WTC11 (cell line): ENCODE measurements at regions of chr3 and their contacts with region 1.

Region 1: DNA sequence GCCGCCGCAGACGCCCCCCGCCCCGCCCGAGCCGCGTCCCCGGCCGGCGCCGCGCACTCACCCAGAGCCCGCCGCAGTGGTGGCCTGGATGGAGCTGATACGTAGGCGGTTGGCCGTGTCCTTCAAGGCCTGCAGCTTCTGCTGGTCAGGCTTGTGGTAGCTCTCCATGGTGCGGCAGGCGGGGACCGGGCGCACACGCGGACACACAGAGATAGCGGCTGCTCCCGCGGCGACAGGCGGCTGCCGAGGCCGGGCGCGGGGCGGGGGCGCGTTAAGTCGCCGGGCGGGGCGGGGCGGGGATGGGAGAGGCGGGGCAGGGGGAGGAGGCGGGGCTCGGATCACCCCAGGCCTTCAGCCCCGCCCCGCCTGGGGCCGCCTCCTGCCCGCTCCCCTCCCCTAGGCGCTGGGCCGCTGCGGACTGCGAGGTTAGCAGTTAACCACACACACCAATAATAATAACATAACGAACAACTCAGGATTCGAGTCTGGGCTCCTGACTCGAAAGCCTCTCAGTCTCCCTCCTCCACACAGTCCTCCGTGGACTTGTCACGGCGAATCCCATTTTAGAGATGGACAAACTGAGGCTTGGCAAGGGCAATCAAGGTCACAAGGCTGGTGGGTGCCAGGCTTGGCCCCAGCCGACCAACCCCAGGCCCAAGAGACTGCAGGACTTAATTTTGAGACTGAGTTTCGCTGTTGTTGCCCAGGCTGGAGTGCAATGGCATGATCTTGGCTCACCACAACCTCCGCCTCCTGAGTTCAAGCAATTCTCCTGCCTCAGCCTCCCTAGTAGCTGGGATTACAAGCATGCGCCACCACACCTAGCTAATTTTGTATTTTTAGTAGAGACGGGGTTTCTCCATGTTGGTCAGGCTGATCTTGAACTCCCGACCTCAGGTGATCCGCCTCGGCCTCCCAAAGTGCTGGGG is at the start of gene TKT:
- DNase-seq: peak; percentile 77
- ATAC-seq: peak; percentile 67
- H3K4me3 Mint-ChIP-seq: peak within 1 kb of the TSS; percentile 85
- H3K27ac Mint-ChIP-seq: peak within 1 kb of the TSS; percentile 92
- H3K4me1 Mint-ChIP-seq: peaks cover 62% of the 10 kb centered on the region
- H3K27me3 Mint-ChIP-seq: peaks cover 9% of the 10 kb centered on the region; the same call in 1 of the 2 replicates
- CTCF ChIP-seq: no peak
- total RNA-seq, gene TKT: 1,040 to 1,222 TPM (median 1,204 TPM) in 3 replicates

Region 2: DNA sequence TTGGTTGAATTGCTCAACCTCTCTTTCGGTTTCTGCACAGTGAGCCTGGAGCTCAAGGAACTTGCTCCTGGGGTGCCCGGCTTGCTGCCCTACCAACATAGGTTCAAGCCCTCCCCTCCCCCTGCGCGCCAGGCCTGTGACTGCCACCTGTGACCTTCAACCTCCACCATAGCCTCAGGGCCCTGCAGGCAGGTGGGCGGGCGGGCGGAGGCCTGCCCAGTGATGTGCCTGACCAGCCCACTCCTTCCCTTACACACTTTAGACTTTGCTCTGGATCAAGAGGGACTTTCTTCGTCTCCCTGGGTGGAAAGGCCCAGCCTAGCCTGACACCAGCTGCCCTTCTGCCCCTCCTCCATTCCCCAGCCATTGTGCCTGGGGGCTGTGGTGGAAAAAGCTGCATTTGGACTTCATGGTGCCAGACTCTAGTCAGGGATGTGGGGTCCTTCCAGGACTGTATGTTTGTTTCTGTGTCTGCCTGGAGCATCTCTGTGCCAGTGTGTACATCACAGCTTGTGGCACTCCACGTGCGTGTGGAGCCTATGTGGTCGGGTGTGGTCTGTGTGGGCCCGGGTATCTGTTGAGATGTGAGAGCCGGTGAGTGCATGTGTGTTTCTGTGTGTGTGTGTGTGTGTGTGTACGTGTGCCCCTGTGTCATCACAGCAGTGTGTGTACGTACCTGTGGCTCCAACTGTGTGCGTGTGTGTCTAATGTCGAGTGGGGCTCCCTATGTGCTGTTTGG is 85.5 kb before region 1 on chr3:
- CTCF ChIA-PET with region 1: no interaction called
- POLR2A ChIA-PET with region 1: no interaction called
- DNase-seq: no peak
- ATAC-seq: no peak
- H3K4me3 Mint-ChIP-seq: no peak overlapping the region
- H3K27ac Mint-ChIP-seq: peak overlapping the region; percentile 81; the same call in 1 of the 2 replicates
- H3K4me1 Mint-ChIP-seq: peaks cover 55% of the 10 kb centered on the region
- H3K27me3 Mint-ChIP-seq: no peaks in the 10 kb centered on the region
- CTCF ChIP-seq: no peak

Region 3: DNA sequence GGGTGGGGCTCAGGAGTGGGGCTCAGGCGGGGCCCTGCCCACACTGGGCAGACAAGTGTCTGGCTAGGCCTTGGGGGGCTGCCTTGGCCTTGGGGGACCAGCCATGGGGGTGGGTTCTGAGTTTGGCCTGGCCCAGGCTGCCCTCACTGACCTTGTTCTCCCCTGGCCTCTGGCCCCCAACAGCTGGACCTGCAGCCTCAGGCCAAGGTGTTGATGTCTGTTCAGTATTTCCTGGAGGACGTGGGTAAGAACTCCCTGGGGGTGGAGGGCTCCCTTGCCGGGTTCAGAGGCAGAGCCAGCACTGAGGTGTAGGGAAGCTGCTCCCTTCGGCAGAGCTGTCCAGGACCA is 75.0 kb before region 1 on chr3:
- CTCF ChIA-PET with region 1: no interaction called
- POLR2A ChIA-PET with region 1: no interaction called
- DNase-seq: no peak
- ATAC-seq: no peak
- H3K4me3 Mint-ChIP-seq: no peak overlapping the region
- H3K27ac Mint-ChIP-seq: no peak overlapping the region
- H3K4me1 Mint-ChIP-seq: no peaks in the 10 kb centered on the region
- H3K27me3 Mint-ChIP-seq: no peaks in the 10 kb centered on the region
- CTCF ChIP-seq: no peak

Region 4: DNA sequence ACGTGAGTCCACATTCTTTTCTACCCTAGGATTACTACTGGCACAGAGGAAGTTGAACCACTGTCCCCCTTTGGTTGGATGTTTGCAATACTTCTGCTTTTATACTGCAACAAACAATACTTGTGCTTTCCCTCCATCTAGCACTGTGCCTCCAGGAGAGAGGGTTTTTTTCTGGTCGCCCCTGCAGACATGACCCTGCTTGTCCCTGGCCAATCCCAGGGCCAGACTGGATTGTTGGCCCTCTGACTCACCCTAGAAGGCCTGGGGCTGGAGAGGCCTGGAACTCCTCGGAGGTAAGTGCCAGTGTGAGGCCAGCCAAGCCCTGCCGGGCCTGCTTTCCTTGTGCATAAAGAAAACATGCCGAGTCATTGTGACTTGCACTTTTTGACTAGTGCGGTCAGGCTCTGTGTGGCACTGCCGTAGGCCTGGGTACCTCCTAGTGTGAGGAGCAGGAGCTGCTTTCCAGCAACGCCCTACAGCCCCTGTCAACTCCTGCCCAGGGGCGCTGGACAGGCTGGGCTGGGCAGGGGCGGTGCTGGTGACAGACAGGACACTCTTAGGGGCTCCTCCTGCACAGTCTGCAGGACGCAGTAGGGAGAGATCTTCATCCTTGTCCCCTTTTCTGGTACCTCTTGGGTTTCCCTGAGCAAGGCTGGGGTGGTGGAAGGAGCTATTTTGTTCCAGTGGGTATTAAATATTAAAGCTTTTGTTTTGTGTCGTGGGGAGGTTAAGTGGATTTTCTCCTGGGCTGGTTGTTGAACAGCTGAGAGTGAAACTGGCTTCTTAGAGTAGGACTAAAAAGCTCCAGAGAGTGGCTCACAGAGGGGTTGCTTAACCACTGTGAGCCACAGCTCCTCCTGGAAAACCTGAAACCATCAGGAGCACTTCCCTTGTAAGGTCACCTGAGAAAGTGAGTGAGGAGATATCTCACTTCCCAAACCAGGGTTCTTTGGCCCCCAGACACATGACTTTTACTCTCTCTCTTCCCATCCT is 14.1 kb after region 1 on chr3:
- CTCF ChIA-PET with region 1: interaction called, 10 read pairs
- POLR2A ChIA-PET with region 1: interaction called, 7 read pairs
- DNase-seq: peak; percentile 60
- ATAC-seq: peak; percentile 90
- H3K4me3 Mint-ChIP-seq: no peak overlapping the region
- H3K27ac Mint-ChIP-seq: peak overlapping the region; percentile 98
- H3K4me1 Mint-ChIP-seq: peaks cover 29% of the 10 kb centered on the region
- H3K27me3 Mint-ChIP-seq: no peaks in the 10 kb centered on the region; the same call in 1 of the 2 replicates
- CTCF ChIP-seq: no peak

Region 5: DNA sequence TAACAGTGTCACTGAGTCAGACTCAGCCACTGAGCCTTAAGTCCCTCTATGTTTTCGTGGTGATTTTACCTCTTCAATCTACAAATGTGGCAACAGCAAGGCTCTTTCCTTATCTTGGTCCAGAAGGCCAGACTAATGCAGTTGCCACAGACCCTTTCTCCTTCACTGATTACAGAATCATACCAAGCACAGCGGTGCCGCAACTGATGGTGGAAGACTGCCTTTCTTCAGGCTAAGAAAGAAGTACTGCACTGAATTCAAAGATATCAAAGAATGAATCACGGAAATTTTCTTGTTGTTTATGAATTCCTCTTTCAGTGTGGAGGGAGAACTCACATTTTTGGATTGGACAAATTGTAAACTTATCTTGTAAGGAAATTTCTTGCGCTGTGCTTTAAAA is 72.7 kb after region 1 on chr3:
- CTCF ChIA-PET with region 1: no interaction called
- POLR2A ChIA-PET with region 1: no interaction called
- DNase-seq: no peak
- ATAC-seq: no peak
- H3K4me3 Mint-ChIP-seq: no peak overlapping the region
- H3K27ac Mint-ChIP-seq: peak overlapping the region; percentile 58
- H3K4me1 Mint-ChIP-seq: no peaks in the 10 kb centered on the region
- H3K27me3 Mint-ChIP-seq: no peaks in the 10 kb centered on the region
- CTCF ChIP-seq: no peak